Activated CD4-positive, alpha-beta T cell treated with anti-CD3 and anti-CD28 coated beads, Interleukin-2, amount 10 ng/mL, durations not matched to agents 24 days and 14 days (primary cell): ENCODE measurements at regions of chr20 and their contacts with region 1.

Region 1: DNA sequence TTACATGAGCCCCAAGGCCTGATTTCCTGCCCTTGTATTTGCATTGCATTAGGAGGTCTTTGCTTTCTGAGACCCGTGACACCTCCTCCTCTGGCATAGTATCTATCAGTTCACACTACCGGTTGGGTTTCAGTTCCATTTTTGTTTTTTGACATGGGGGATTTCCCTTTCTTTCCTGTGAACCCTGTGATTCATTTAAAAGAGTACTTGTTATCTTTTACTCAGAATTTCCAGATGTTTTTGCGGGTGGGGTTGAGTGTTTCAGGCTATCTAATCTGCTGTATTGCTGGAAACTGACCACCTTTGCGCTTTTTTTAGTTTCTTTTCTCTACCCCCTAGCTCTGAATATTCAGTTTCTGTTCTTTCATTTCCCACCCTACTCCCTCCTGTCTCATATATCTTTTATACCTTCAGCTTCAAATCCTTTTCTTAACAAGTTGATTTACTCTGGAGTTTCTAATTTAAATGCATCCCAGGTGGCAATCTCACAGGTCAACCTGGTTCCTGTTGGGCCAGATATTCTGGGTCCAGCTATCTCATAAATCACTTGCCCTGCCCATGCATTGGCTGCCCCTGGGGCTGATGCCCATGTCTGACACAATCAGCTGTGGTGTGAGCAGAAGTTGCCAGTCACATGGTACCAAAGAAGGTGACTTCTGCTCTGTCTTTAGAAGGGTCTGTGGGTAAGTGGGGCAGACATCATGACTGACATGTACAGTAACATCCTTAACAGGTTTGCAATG is 14.3 kb upstream of the NCOA3 start:
- DNase-seq: peak; percentile 92
- H3K4me3 Mint-ChIP-seq: peak overlapping the region; percentile 72
- H3K27ac Mint-ChIP-seq: peak overlapping the region; percentile 99
- H3K4me1 Mint-ChIP-seq: peaks cover 43% of the 10 kb centered on the region
- H3K27me3 Mint-ChIP-seq: no peaks in the 10 kb centered on the region

Region 2: GRCh38 chr20:47196091-47197081 is 291.0 kb before region 1 on chr20:
- intact Hi-C with region 1: loop called (anchors 1 kb)
- DNase-seq: peak; percentile 93
- H3K4me3 Mint-ChIP-seq: peak overlapping the region; percentile 7
- H3K27ac Mint-ChIP-seq: peak overlapping the region; percentile 65
- H3K4me1 Mint-ChIP-seq: peaks cover 8% of the 10 kb centered on the region
- H3K27me3 Mint-ChIP-seq: peaks cover 5% of the 10 kb centered on the region

Region 3: GRCh38 chr20:47266847-47267448 is 220.4 kb before region 1 on chr20:
- intact Hi-C with region 1: no loop called
- DNase-seq: no peak
- H3K4me3 Mint-ChIP-seq: no peak overlapping the region
- H3K27ac Mint-ChIP-seq: no peak overlapping the region
- H3K4me1 Mint-ChIP-seq: peaks cover 6% of the 10 kb centered on the region
- H3K27me3 Mint-ChIP-seq: no peaks in the 10 kb centered on the region

Region 4: DNA sequence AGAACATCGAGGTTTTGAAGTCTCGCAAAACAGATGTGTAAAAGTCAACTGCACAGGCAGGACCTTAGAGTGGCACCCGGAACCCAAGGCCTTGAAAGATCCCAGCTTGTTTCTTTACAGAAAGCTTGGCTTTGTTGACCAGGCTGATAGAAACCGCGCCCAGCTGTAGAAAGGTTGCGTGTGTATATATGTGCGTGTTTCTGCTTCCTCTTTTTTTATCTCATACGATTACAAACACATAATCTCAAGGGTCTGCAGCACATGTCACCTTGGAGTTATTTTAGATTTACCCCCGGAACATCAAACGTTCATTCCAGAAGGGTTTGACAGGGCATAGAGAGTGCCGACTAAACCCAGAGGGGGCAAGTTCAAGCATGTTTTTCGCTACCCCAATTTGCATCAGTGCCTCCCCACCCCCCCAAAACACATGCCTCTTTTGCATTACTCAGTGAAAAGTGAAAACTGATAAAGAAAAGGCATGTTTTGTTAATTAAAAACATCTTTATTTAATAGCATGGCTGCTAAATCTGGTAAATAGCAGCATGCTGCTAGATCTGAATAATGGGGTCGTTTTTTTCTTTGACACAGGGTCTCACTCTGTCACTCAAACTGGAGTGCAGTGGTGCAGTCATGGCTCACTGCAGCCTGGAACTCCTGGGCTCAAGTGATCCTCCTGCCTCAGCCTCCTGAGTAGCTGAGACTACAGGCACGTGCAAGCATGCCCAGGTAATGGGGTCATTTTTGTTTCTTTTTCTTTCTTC is 18.9 kb before region 1 on chr20:
- intact Hi-C with region 1: loop called (anchors 2 kb)
- DNase-seq: no peak
- H3K4me3 Mint-ChIP-seq: no peak overlapping the region
- H3K27ac Mint-ChIP-seq: no peak overlapping the region
- H3K4me1 Mint-ChIP-seq: peaks cover 22% of the 10 kb centered on the region
- H3K27me3 Mint-ChIP-seq: no peaks in the 10 kb centered on the region

Region 5: DNA sequence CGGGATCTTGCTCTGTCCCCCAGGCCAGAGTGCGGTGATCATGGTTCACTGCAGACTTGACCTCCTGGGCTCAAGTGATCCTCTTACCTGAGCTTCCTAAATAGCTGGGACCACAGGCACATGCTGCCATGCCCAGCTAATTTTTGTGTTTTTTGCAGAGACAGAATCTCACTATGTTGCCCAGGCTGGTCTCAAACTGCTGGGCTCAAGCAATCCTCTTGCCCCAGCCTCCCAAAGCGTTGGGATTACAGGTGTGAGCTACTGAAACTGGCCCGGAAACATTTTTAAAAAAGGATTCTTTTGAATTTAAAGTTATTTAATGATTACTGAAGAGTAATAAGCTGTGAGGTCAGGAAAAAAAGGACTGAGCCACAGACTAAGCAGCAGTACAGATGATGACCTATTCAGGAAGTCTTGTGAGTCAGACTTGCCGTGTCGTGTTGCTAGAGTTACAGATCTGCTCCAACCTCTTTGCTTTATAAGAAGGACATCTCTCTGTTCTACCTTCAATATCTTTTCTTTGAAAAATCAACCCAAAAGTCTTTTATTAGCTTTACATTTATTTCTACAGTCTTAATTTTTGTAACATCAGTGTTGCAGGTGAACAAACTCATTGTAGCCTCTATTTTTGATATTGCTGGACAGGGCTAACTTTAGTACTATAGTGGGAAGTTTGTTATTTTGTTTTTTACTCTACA is 123.0 kb after region 1 on chr20:
- intact Hi-C with region 1: loop called (anchors 1 kb)
- DNase-seq: peak; percentile 90
- H3K4me3 Mint-ChIP-seq: peak overlapping the region; percentile 78
- H3K27ac Mint-ChIP-seq: peak overlapping the region; percentile 95
- H3K4me1 Mint-ChIP-seq: peaks cover 68% of the 10 kb centered on the region
- H3K27me3 Mint-ChIP-seq: no peaks in the 10 kb centered on the region

Region 6: GRCh38 chr20:47663333-47664067 is 176.2 kb after region 1 on chr20:
- intact Hi-C with region 1: no loop called
- DNase-seq: peak; percentile 93
- H3K4me3 Mint-ChIP-seq: no peak overlapping the region
- H3K27ac Mint-ChIP-seq: peak overlapping the region; percentile 11
- H3K4me1 Mint-ChIP-seq: peaks cover 8% of the 10 kb centered on the region
- H3K27me3 Mint-ChIP-seq: no peaks in the 10 kb centered on the region